ENCODE measurements at regions of chr2 and their contacts with region 1.

Region 1: DNA sequence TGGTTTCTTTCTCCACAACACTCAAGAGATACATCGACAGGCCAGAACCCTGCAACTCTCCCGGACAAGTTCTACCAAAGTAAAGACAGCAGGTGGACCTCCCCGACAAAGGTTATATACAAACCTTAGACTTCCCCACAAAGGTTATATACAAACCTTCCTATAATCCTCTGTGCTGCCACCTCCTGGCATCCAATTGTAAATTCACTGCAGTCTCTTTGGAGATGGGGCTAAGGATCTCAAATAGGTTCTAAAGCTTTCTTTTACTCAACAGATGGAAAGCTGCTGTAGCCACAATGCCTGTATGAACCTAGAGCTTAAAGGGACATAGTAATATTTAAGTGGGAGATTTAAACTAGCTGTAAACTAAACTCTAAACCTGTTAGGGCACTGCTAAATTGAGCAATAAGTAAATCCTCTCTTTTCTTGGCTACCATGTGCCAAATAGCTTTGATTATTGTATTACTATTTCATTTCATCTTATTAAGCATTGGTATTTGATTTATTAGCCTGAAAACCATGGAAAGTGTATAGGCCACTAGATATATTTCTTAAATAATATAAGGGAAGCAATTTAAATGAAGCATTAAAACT is 9.8 kb upstream of the MREG start:
- DNase-seq: peak; percentile 71
- ATAC-seq: peak; percentile 88
- H3K4me3 Mint-ChIP-seq: no peak overlapping the region
- H3K27ac Mint-ChIP-seq: no peak overlapping the region
- H3K4me1 Mint-ChIP-seq: peaks cover 9% of the 10 kb centered on the region
- H3K27me3 Mint-ChIP-seq: no peaks in the 10 kb centered on the region

Region 2: DNA sequence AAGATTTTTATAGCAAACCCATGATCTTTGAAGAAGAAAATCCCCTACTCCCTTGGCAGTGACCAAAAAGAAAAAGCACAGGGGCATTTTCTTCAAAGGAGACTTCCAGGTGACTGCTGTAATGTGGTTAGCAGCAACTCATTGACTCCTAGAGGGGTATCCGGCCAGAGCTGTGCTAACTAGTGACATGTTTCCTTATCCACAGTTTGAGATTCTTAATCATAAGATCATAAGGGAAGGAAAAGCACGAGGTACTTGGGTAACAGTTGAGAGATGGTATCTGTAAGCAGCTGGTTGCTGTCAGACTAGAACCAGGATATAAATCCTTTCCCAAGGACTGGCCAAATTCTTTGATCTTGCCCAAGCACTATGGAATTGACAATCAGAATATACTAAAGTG is 134.5 kb before region 1 on chr2:
- CTCF ChIA-PET with region 1: no interaction called
- POLR2A ChIA-PET with region 1: no interaction called
- DNase-seq: no peak
- ATAC-seq: no peak
- H3K4me3 Mint-ChIP-seq: no peak overlapping the region
- H3K27ac Mint-ChIP-seq: no peak overlapping the region
- H3K4me1 Mint-ChIP-seq: no peaks in the 10 kb centered on the region
- H3K27me3 Mint-ChIP-seq: peaks cover 9% of the 10 kb centered on the region

Region 3: DNA sequence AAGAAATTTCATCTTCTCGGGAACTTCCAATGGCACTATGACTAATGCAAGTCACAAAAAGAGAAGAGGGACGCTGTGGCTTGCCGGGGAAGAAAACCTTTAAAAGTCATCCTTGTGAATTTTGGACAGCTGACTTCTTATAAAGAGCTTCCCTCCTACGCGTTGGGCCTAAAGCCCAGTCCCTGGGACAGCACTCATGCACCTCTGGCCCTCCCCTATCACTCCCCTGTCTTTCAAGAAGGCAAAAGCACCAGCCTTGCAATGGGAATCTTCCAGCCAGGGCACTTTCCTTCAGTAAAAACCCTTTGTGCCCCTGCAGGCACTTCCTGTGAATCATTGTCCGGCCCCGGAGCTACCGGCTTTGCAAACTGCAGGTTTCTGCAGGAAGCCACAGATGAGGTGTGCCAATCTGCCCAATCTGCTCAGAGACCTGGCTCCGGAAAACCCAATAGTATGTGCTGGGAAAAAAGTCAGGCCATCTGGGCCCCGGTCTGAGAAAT is 16.9 kb before region 1 on chr2:
- CTCF ChIA-PET with region 1: interaction called, 14 read pairs
- POLR2A ChIA-PET with region 1: no interaction called
- DNase-seq: peak; percentile 57
- ATAC-seq: peak; percentile 67
- H3K4me3 Mint-ChIP-seq: peak overlapping the region; percentile 37
- H3K27ac Mint-ChIP-seq: peak overlapping the region; percentile 67
- H3K4me1 Mint-ChIP-seq: peaks cover 42% of the 10 kb centered on the region
- H3K27me3 Mint-ChIP-seq: no peaks in the 10 kb centered on the region

Region 4: GRCh38 chr2:216130346-216130971 is 107.3 kb after region 1 on chr2:
- CTCF ChIA-PET with region 1: no interaction called
- POLR2A ChIA-PET with region 1: no interaction called
- DNase-seq: no peak
- ATAC-seq: no peak
- H3K4me3 Mint-ChIP-seq: no peak overlapping the region
- H3K27ac Mint-ChIP-seq: peak overlapping the region; percentile 39
- H3K4me1 Mint-ChIP-seq: peaks cover 27% of the 10 kb centered on the region
- H3K27me3 Mint-ChIP-seq: no peaks in the 10 kb centered on the region

Region 5: DNA sequence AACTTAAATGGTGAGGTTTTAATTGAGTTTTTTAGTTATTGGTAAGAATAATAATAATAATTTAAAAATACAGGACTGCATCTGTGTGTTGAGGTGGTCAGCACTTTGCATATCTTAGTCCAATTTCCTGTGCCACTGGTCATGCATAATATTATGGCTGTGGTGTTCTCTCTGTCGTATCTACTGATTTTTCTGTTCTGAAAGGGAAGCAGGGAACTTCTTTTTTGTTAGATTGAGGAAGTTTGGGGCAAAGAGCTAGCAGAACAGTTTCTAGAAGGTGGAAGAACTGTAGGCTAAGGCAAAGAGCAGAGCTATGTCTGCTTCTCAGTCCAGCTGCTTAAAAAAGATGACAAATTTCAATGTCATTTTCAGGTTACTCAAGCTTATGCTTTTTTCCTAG is 160.3 kb after region 1 on chr2:
- CTCF ChIA-PET with region 1: no interaction called
- POLR2A ChIA-PET with region 1: no interaction called
- DNase-seq: no peak
- ATAC-seq: no peak
- H3K4me3 Mint-ChIP-seq: no peak overlapping the region
- H3K27ac Mint-ChIP-seq: peak overlapping the region; percentile 43
- H3K4me1 Mint-ChIP-seq: peaks cover 40% of the 10 kb centered on the region
- H3K27me3 Mint-ChIP-seq: no peaks in the 10 kb centered on the region

Measured in activated CD8-positive, alpha-beta T cell treated with anti-CD3 and anti-CD28 coated beads, Interleukin-2, amount 10 ng/mL, durations not matched to agents 7 days and 5 days (primary cell).